Endothelial cell of umbilical vein (primary cell): ENCODE measurements at regions of chr5 and their contacts with region 1.

Region 1: DNA sequence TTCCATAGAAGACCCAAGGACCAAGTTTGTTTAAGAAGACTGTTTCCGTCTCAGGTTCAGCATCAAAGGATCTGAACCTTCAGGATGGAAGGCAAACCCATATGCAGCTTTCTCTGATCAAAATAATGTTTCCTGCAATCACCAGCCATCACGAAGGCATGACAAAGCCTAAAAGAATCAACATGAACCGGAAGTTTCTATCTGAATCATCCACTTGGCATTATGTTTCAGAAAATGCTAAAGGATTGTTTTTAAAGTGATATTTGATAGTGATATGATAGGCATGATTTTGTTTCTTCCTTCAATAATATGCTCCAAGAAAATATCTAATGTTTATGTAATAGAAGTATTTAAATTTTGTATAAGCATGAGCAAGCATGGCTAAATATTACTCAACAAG is 219.6 kb downstream of the PLK2 start:
- DNase-seq: peak; percentile 89
- H3K4me3 ChIP-seq: no peak overlapping the region
- H3K27ac ChIP-seq: peak overlapping the region; percentile 89
- H3K4me1 ChIP-seq: peaks cover 54% of the 10 kb centered on the region
- H3K27me3 ChIP-seq: no peaks in the 10 kb centered on the region
- CTCF ChIP-seq: no peak
- POLR2A ChIP-seq: no peak

Region 2: GRCh38 chr5:57494104-57495098 is 745.9 kb before region 1 on chr5:
- CTCF ChIA-PET with region 1: interaction called, 5 read pairs
- POLR2A ChIA-PET with region 1: no interaction called
- dilution Hi-C with region 1: no loop called
- intact Hi-C with region 1: loop called (anchors 2 kb)
- DNase-seq: peak; percentile 93
- H3K4me3 ChIP-seq: no peak overlapping the region
- H3K27ac ChIP-seq: peak overlapping the region; percentile 92
- H3K4me1 ChIP-seq: peaks cover 48% of the 10 kb centered on the region
- H3K27me3 ChIP-seq: no peaks in the 10 kb centered on the region
- CTCF ChIP-seq: no peak
- POLR2A ChIP-seq: no peak

Region 3: DNA sequence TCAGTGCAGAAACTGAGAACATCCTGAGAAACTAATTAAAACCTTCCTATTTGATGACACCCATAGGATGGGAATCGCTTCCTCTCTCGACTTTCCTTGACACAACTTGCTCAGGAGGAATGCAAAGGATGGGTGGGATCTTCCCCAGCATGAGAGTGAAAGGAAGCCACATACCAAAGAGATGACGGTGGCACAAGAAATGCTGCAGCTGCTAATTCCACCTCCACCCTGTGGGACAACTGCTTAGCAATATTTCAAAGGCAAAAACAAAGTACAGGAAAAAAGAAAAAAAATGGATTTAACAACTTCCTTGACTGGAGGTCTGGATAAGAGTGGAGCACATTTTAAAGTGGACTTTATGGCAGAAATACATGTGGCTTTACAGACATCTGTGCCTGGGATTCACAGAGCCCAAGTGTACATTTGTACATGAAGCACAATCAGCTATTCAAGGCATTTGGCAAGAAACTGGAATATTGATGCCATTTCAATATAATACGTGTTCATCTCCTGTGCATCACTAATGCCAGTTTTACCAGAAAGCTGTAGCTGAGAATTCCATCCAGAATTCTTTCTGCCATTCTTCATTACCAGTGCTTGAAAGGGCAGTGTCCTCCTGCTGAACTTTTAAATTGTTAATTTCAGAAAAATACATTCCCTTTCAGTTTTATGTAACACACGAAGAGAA is 398.5 kb before region 1 on chr5:
- CTCF ChIA-PET with region 1: no interaction called
- POLR2A ChIA-PET with region 1: no interaction called
- dilution Hi-C with region 1: no loop called
- intact Hi-C with region 1: loop called (anchors 1 kb)
- DNase-seq: peak; percentile 96
- H3K4me3 ChIP-seq: no peak overlapping the region
- H3K27ac ChIP-seq: peak overlapping the region; percentile 90
- H3K4me1 ChIP-seq: peaks cover 66% of the 10 kb centered on the region
- H3K27me3 ChIP-seq: no peaks in the 10 kb centered on the region
- CTCF ChIP-seq: no peak
- POLR2A ChIP-seq: no peak

Region 4: DNA sequence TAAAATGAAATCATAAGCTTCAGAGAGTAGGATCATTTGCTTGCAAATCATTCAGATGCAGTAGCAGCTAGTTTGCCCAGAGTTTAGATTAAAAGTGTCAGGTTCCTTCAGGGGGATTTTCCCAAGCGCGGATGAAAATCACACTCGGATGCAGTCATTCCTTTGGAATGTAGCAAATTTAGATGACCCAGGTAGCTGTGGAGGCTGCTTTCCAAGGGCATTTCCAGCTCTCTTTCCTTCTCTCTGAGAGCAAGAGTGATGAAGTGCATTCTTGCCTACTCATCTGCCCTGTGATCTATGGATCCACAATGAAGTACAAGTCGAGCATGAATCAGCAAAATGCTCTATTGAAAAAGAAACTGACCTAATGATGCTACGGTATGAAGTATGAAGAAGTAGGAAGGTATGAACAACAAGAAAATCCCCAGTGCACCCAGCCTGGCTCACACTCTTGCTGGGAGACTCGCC is 19.4 kb after region 1 on chr5:
- CTCF ChIA-PET with region 1: interaction called, 17 read pairs
- POLR2A ChIA-PET with region 1: interaction called, 3 read pairs
- dilution Hi-C with region 1: no loop called
- intact Hi-C with region 1: loop called (anchors 2 kb)
- DNase-seq: peak; percentile 85
- H3K4me3 ChIP-seq: peak overlapping the region in 1 of 3 experiments; percentile 20
- H3K27ac ChIP-seq: peak overlapping the region; percentile 91
- H3K4me1 ChIP-seq: peaks cover 26% of the 10 kb centered on the region
- H3K27me3 ChIP-seq: no peaks in the 10 kb centered on the region
- CTCF ChIP-seq: no peak
- POLR2A ChIP-seq: peak; percentile 42

Region 5: DNA sequence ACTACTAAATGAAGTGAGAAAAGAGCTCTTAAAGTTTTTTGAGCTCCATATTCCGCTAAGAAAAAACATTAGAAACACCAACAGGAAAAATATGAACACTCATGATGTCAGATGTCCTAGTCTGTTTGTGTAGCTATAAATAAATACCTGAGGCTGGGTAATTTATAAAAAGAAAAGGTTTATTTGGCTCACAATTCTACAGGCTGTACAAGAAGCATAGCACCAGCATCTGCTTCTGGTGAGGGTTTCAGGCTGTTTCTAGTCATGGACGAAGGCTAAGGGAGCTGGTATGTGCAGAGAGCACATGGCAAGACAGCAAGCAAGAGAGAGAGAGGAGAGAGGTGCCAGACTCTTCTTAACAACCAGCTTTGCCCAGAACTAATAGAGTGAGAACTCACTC is 33.4 kb after region 1 on chr5:
- CTCF ChIA-PET with region 1: interaction called, 9 read pairs
- POLR2A ChIA-PET with region 1: interaction called, 6 read pairs
- dilution Hi-C with region 1: no loop called
- intact Hi-C with region 1: loop called (anchors 1 kb)
- DNase-seq: no peak
- H3K4me3 ChIP-seq: no peak overlapping the region
- H3K27ac ChIP-seq: peak overlapping the region; percentile 42
- H3K4me1 ChIP-seq: peaks cover 12% of the 10 kb centered on the region
- H3K27me3 ChIP-seq: no peaks in the 10 kb centered on the region
- CTCF ChIP-seq: no peak
- POLR2A ChIP-seq: no peak